Dorsolateral prefrontal cortex (tissue), 120 donors: ENCODE measurements at regions of chr3 and their contacts with region 1.

Region 1: GRCh38 chr3:73056014-73056844 is 5.2 kb upstream of the EBLN2 start:
- DNase-seq: no peak
- H3K4me3 ChIP-seq: peak overlapping the region in 6 of 59 donors; percentile 2 to 27 (median 17)
- H3K27ac ChIP-seq: peak overlapping the region in 41 of 59 donors; percentile 6 to 81 (median 57)
- H3K27me3 ChIP-seq: no peaks in the 10 kb centered on the region
- CTCF ChIP-seq: peak in 55 of 56 donors; percentile 24 to 85 (median 66)

Region 2: GRCh38 chr3:71805199-71805598 is 1251.0 kb before region 1 on chr3:
- intact Hi-C with region 1: no loop called
- DNase-seq: no peak
- H3K4me3 ChIP-seq: no peak overlapping the region
- H3K27ac ChIP-seq: no peak overlapping the region
- H3K27me3 ChIP-seq: peaks cover 0 to 40% (median 6%) of the 10 kb centered on the region in 45 donors
- CTCF ChIP-seq: no peak

Region 3: GRCh38 chr3:72836923-72837322 is 219.3 kb before region 1 on chr3:
- intact Hi-C with region 1: loop called in 1 of 2 experiments (anchors 5 kb)
- DNase-seq: peak; percentile 47 to 80 (median 73)
- H3K4me3 ChIP-seq: no peak overlapping the region
- H3K27ac ChIP-seq: peak overlapping the region in 4 of 59 donors; percentile 8 to 26 (median 14)
- H3K27me3 ChIP-seq: no peaks in the 10 kb centered on the region
- CTCF ChIP-seq: peak in 23 of 56 donors; percentile 6 to 44 (median 22)

Region 4: DNA sequence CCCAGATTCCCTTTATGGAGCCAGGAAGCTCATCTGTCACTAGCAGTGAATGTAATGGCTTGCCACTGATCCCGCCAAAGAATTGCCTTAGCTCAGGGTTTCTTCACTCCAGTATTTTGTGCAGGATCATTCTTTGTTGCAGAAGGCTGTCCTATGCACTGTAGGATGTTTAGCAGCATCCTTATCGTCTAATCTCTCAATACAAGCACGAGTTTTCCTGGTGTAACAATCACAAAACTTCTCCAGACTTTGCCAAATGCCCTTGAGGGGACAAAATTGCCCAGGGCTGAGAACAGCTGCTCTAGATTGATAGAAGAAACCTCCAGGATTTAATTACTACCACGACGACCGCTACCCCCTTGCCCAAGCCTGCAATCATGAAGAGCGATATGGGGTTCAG is 201.2 kb before region 1 on chr3:
- intact Hi-C with region 1: loop called in 1 of 2 experiments (anchors 10 kb)
- DNase-seq: no peak
- H3K4me3 ChIP-seq: no peak overlapping the region
- H3K27ac ChIP-seq: no peak overlapping the region
- H3K27me3 ChIP-seq: peaks cover 0 to 12% (median 0%) of the 10 kb centered on the region in 45 donors
- CTCF ChIP-seq: no peak

Region 5: DNA sequence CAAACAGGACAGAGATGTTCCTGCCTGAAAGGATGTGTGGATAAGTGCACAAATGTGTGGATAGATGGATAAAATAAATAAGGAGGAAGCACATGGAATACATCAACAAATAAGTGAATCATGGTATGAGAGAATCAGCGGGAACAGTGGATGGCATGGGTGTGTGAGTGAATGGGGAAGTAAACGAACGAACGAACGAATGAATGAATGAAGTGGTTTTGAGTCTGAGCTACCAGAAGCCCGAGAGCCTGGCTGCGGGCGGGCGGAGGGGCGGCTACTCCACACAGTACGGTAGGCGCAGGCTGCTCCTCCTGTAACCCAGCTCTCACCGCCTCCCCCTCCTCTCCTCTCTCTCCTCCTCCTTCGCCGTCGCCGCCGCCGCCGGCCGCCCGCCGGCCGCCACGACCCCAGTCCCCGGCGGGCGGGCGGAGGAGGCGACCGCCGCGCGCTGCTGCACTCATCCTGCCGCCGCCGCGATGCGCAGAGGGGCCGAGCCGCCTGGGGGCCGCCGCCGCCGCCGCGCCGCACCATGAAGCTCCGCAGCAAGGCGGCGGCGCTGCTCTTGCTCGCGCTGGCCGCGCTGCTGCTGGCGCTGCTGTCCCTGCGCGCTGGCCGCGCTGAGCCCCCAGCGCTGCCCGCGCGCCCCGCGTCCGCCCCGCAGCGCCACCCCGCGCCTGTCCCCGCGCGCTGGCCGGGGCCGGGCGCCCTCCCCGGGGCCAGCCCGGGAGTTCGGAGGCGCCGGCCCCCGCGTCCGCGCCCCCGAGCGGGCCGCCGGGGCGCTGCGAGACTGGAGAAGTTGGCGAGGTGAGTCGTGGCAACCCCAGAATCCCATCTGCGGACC is 168.3 kb before region 1 on chr3 and contains the start of gene GXYLT2:
- intact Hi-C with region 1: loop called in 1 of 2 experiments (anchors 5 kb)
- DNase-seq: peak; percentile 48 to 87 (median 80)
- H3K4me3 ChIP-seq: peak within 1 kb of the TSS; percentile 32 to 83 (median 63)
- H3K27ac ChIP-seq: peak within 1 kb of the TSS; percentile 4 to 92 (median 82)
- H3K27me3 ChIP-seq: no peaks in the 10 kb centered on the region
- CTCF ChIP-seq: peak in 9 of 56 donors; percentile 4 to 23 (median 11)
- total RNA-seq, gene GXYLT2: 4.5 to 19.1 (median 9.2) TPM

Region 6: GRCh38 chr3:72938471-72939265 is 117.6 kb before region 1 on chr3:
- intact Hi-C with region 1: loop called (anchors 2 to 5 kb)
- DNase-seq: peak in 3 of 10 donors; percentile 7 to 30 (median 10)
- H3K4me3 ChIP-seq: peak overlapping the region in 17 of 59 donors; percentile 5 to 34 (median 16)
- H3K27ac ChIP-seq: peak overlapping the region in 58 of 59 donors; percentile 10 to 86 (median 74)
- H3K27me3 ChIP-seq: no peaks in the 10 kb centered on the region
- CTCF ChIP-seq: peak in 55 of 56 donors; percentile 44 to 89 (median 73)

Region 7: DNA sequence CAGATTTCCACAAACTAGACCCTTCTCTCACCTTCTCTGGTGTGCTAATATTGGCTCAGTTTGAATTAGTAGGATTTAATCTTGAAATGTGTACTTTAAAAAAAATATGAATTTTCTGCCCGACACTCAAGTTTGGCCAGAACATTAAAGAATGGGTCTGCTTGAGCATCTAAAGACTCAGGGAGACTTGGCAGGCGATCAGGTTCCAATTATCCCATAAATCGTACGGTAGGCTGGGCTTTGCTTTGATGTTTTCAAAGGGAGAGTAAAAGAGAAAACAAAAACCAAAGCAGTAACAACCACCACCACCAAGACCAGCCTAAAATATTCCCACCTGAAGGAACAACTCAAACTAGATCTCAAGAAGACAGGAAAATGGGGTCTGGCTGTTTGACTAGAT is 236.0 kb after region 1 on chr3:
- intact Hi-C with region 1: no loop called
- DNase-seq: no peak
- H3K4me3 ChIP-seq: no peak overlapping the region
- H3K27ac ChIP-seq: no peak overlapping the region
- H3K27me3 ChIP-seq: peaks cover 0 to 5% (median 0%) of the 10 kb centered on the region in 45 donors
- CTCF ChIP-seq: no peak